Panc1 (cell line): ENCODE measurements at regions of chr12 and their contacts with region 1.

Region 1: GRCh38 chr12:53267999-53268647 is at the start of gene ESPL1:
- DNase-seq: no peak
- ATAC-seq: peak; percentile 95
- H3K4me3 ChIP-seq: peak within 1 kb of the TSS; percentile 76 to 82
- H3K27ac ChIP-seq: peak within 1 kb of the TSS; percentile 86
- H3K4me1 ChIP-seq: peaks cover 20% of the 10 kb centered on the region
- H3K27me3 ChIP-seq: no peaks in the 10 kb centered on the region
- CTCF ChIP-seq: no peak
- total RNA-seq, gene ESPL1: 54.6 TPM

Region 2: DNA sequence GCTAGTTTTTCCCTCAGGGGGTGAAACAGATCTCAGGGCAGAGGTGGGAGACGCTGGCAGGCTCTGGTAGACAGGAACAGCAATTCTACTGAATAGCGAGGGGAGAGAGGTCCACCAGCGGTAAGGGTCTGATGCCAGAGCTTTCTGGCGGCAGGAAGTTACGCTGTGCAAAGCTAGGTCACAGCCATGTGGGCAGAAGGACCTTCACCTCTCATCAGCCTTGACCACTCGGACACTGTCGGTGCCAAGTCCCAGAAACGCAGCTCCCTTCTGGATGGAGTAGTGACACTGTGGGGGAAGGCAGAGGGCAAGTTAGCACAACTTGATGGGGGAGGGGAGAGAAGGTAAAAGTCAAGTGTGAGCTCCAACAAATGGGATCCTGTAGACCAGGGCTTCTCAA is 97.9 kb before region 1 on chr12:
- CTCF ChIA-PET with region 1: interaction called, 10 read pairs
- POLR2A ChIA-PET with region 1: no interaction called
- in situ Hi-C with region 1: no loop called
- intact Hi-C with region 1: no loop called
- DNase-seq: no peak
- ATAC-seq: no peak
- H3K4me3 ChIP-seq: no peak overlapping the region
- H3K27ac ChIP-seq: no peak overlapping the region
- H3K4me1 ChIP-seq: peaks cover 6% of the 10 kb centered on the region
- H3K27me3 ChIP-seq: no peaks in the 10 kb centered on the region
- CTCF ChIP-seq: no peak

Region 3: GRCh38 chr12:53224061-53224896 is 43.8 kb before region 1 on chr12:
- CTCF ChIA-PET with region 1: no interaction called
- POLR2A ChIA-PET with region 1: no interaction called
- in situ Hi-C with region 1: no loop called
- intact Hi-C with region 1: no loop called
- DNase-seq: no peak
- ATAC-seq: no peak
- H3K4me3 ChIP-seq: no peak overlapping the region
- H3K27ac ChIP-seq: peak overlapping the region; percentile 82
- H3K4me1 ChIP-seq: peaks cover 34% of the 10 kb centered on the region
- H3K27me3 ChIP-seq: no peaks in the 10 kb centered on the region
- CTCF ChIP-seq: no peak; the same call in 1 of the 2 replicates

Region 4: DNA sequence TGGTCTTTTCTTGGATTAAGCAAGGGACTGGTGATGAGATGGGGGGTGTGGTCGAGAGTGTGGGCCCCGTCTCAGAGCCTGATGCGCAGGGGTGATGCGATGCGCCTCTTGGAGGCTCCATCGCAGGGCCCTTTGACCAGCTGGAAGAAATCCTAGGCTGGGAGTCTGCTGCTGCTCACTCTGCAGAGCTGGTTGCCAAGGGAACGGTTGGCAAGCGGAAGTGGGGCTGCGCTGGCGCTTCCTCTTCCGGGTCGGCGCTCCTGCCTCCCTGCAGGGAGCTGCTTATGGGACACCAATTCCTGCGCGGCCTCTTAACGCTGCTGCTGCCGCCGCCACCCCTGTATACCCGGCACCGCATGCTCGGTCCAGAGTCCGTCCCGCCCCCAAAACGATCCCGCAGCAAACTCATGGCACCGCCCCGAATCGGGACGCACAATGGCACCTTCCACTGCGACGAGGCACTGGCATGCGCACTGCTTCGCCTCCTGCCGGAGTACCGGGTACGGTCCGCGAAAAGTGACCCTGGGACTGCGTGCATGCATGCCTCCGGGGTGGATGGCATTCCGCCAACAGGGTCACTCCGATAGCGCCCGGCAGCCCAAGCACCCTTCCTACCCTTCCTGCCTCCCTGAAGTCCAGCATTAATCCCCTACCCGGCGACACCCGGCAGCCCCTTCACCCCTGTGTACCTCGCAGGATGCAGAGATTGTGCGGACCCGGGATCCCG is 31.5 kb after region 1 on chr12 and contains the start of gene MYG1:
- CTCF ChIA-PET with region 1: no interaction called
- POLR2A ChIA-PET with region 1: no interaction called
- in situ Hi-C with region 1: no loop called
- intact Hi-C with region 1: no loop called
- DNase-seq: peak; percentile 63
- ATAC-seq: peak; percentile 92
- H3K4me3 ChIP-seq: peak within 1 kb of the TSS; percentile 63 to 83
- H3K27ac ChIP-seq: peak within 1 kb of the TSS; percentile 95
- H3K4me1 ChIP-seq: peaks cover 50% of the 10 kb centered on the region
- H3K27me3 ChIP-seq: no peaks in the 10 kb centered on the region
- CTCF ChIP-seq: no peak
- total RNA-seq, gene MYG1: 77.4 TPM